Calu3 (cell line): ENCODE measurements at regions of chr3 and their contacts with region 1.

Region 1: GRCh38 chr3:52144034-52144795 is 10.0 kb downstream of the POC1A start:
- DNase-seq: peak; percentile 86
- H3K4me3 Mint-ChIP-seq: no peak overlapping the region
- H3K27ac Mint-ChIP-seq: no peak overlapping the region
- H3K4me1 Mint-ChIP-seq: no peaks in the 10 kb centered on the region
- H3K27me3 Mint-ChIP-seq: no peaks in the 10 kb centered on the region
- CTCF ChIP-seq: peak; percentile 94

Region 2: GRCh38 chr3:52056968-52057805 is 87.0 kb before region 1 on chr3:
- CTCF ChIA-PET with region 1: interaction called, 3 read pairs
- intact Hi-C with region 1: loop called (anchors 5 kb)
- DNase-seq: peak; percentile 98
- H3K4me3 Mint-ChIP-seq: peak overlapping the region; percentile 80
- H3K27ac Mint-ChIP-seq: peak overlapping the region; percentile 81
- H3K4me1 Mint-ChIP-seq: peaks cover 35% of the 10 kb centered on the region
- H3K27me3 Mint-ChIP-seq: no peaks in the 10 kb centered on the region
- CTCF ChIP-seq: no peak

Region 3: GRCh38 chr3:52197842-52198668 is 53.8 kb after region 1 on chr3 and contains the start of gene ALAS1:
- CTCF ChIA-PET with region 1: no interaction called
- intact Hi-C with region 1: no loop called
- DNase-seq: peak; percentile 95
- H3K4me3 Mint-ChIP-seq: peak within 1 kb of the TSS; percentile 96
- H3K27ac Mint-ChIP-seq: peak within 1 kb of the TSS; percentile 97
- H3K4me1 Mint-ChIP-seq: peaks cover 33% of the 10 kb centered on the region
- H3K27me3 Mint-ChIP-seq: no peaks in the 10 kb centered on the region
- CTCF ChIP-seq: no peak
- total RNA-seq, gene ALAS1: 80.2 and 81.7 TPM in 2 replicates

Region 4: GRCh38 chr3:52306978-52307377 is 162.8 kb after region 1 on chr3:
- CTCF ChIA-PET with region 1: no interaction called
- intact Hi-C with region 1: no loop called
- DNase-seq: no peak
- H3K4me3 Mint-ChIP-seq: no peak overlapping the region
- H3K27ac Mint-ChIP-seq: no peak overlapping the region
- H3K4me1 Mint-ChIP-seq: no peaks in the 10 kb centered on the region
- H3K27me3 Mint-ChIP-seq: no peaks in the 10 kb centered on the region
- CTCF ChIP-seq: no peak

Region 5: DNA sequence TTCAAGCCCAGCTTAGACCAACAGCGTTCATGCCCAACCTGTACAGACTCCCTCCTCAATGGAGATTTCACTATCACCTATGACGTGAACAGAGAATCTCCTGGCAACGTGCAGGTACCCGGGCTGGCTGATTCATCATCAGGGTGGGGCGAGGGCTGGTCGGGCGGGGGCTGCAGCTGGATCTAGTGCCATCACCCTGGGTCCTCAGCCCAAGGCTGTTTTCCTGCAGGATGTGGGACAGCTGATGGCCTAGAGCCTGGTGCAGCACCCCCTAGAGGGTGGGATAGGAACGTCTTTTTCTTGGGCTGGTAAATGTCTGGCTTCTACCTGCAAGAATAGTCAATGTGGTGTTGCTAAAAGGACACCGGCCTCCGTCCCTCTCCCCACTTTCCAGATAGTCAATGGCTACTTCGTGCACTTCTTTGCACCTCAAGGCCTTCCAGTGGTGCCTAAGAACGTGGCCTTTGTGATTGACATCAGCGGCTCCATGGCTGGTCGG is 654.8 kb after region 1 on chr3:
- CTCF ChIA-PET with region 1: no interaction called
- intact Hi-C with region 1: no loop called
- DNase-seq: peak; percentile 60
- H3K4me3 Mint-ChIP-seq: no peak overlapping the region
- H3K27ac Mint-ChIP-seq: no peak overlapping the region
- H3K4me1 Mint-ChIP-seq: no peaks in the 10 kb centered on the region
- H3K27me3 Mint-ChIP-seq: peaks cover under 1% of the 10 kb centered on the region
- CTCF ChIP-seq: peak; percentile 73

Region 6: GRCh38 chr3:52897130-52898122 is 753.2 kb after region 1 on chr3 and contains the start of gene STIMATE:
- CTCF ChIA-PET with region 1: no interaction called
- intact Hi-C with region 1: no loop called
- DNase-seq: peak; percentile 91
- H3K4me3 Mint-ChIP-seq: peak within 1 kb of the TSS; percentile 83
- H3K27ac Mint-ChIP-seq: peak within 1 kb of the TSS; percentile 48
- H3K4me1 Mint-ChIP-seq: no peaks in the 10 kb centered on the region
- H3K27me3 Mint-ChIP-seq: no peaks in the 10 kb centered on the region
- CTCF ChIP-seq: no peak
- total RNA-seq, gene STIMATE: 11.7 and 13.3 TPM in 2 replicates